AG04449 (cell line): ENCODE measurements at regions of chr15 and their contacts with region 1.

Region 1: GRCh38 chr15:31265871-31266711 is 60.5 kb upstream of the KLF13 start:
- DNase-seq: no peak
- H3K4me3 ChIP-seq: no peak overlapping the region
- CTCF ChIP-seq: no peak

Region 2: DNA sequence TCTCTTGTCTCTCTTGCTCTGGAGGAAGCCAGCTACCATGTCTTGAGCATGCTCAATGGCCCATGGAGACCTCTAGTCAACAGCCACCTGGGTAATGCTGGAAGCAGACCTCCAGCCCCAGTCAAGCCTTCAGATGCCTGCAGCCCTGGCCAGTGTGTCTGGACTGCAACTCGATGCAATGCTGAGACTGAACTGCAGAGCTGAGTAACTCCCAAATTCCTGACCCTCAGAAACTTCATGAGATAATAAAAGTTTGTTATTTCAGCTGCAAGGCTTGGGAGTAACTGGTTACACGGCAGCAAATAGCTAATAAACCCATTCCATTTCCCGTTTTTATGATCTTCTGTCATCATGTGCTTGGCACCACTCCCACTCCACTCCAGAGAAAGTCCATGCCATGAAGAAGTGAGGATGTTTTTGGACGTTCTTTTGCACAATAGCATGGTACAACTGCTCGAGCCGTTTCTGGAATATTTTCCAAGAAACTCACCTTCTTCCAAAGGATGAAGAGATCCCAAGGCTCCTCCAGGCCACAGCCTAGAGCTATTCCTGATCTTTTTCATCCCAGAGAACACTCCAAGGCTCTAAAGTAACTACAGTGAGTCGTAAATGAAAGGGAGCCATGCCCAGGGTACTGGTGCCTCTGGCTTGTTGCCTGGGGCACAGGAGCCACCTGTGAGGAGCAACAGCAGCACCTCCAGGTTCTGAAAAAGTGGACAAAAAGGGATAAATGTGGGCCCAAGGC is 11.5 kb before region 1 on chr15:
- CTCF ChIA-PET with region 1: interaction called, 19 read pairs
- POLR2A ChIA-PET with region 1: no interaction called
- DNase-seq: peak; percentile 79
- H3K4me3 ChIP-seq: no peak overlapping the region
- CTCF ChIP-seq: no peak